ENCODE measurements at regions of chr3 and their contacts with region 1.

Region 1: GRCh38 chr3:187946163-187946691 is 201.0 kb upstream of the BCL6 start:
- DNase-seq: peak; percentile 52
- H3K4me3 ChIP-seq: no peak overlapping the region
- H3K27ac ChIP-seq: peak overlapping the region; percentile 25
- H3K27me3 ChIP-seq: peaks cover 3% of the 10 kb centered on the region
- CTCF ChIP-seq: no peak

Region 2: DNA sequence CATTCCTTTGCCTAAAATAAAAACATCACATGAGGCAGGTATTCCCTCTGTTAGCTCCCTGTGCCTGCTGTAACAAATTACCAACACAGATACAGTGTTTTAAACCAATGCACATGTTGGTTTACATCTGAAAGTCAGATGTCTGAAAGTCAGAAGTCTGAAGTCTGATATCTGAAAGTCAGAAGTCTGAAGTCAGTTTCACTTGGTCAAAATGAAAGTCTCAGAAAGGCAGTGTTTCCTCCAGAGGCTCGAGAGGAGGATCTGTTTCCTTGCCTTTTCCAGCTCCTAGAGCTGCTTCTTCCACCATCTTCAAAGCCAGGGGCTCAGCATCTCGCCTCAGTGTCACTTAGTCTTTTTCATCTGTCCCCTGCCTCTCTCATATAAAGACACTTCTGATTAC is 298.1 kb before region 1 on chr3:
- CTCF ChIA-PET with region 1: no interaction called
- POLR2A ChIA-PET with region 1: no interaction called
- DNase-seq: no peak
- H3K4me3 ChIP-seq: no peak overlapping the region
- H3K27ac ChIP-seq: no peak overlapping the region
- H3K27me3 ChIP-seq: peaks cover 10% of the 10 kb centered on the region
- CTCF ChIP-seq: no peak

Region 3: GRCh38 chr3:187841598-187841959 is 104.6 kb before region 1 on chr3:
- CTCF ChIA-PET with region 1: no interaction called
- POLR2A ChIA-PET with region 1: interaction called, 16 read pairs
- DNase-seq: no peak
- H3K4me3 ChIP-seq: no peak overlapping the region
- H3K27ac ChIP-seq: no peak overlapping the region
- H3K27me3 ChIP-seq: peaks cover 8% of the 10 kb centered on the region
- CTCF ChIP-seq: no peak

Region 4: GRCh38 chr3:187935623-187936156 is 10.5 kb before region 1 on chr3:
- CTCF ChIA-PET with region 1: no interaction called
- POLR2A ChIA-PET with region 1: no interaction called
- DNase-seq: no peak
- H3K4me3 ChIP-seq: no peak overlapping the region
- H3K27ac ChIP-seq: peak overlapping the region; percentile 47
- H3K27me3 ChIP-seq: no peaks in the 10 kb centered on the region
- CTCF ChIP-seq: no peak

Region 5: GRCh38 chr3:188262913-188263683 is 316.9 kb after region 1 on chr3:
- CTCF ChIA-PET with region 1: no interaction called
- POLR2A ChIA-PET with region 1: no interaction called
- DNase-seq: no peak
- H3K4me3 ChIP-seq: no peak overlapping the region
- H3K27ac ChIP-seq: peak overlapping the region; percentile 39
- H3K27me3 ChIP-seq: no peaks in the 10 kb centered on the region
- CTCF ChIP-seq: no peak

Measured in AG04450 (cell line).